ENCODE measurements at regions of chr7 and their contacts with region 1.

Region 1: GRCh38 chr7:21945454-21946227 is at the start of gene CDCA7L:
- DNase-seq: peak; percentile 44 to 93 (median 58)

Region 2: DNA sequence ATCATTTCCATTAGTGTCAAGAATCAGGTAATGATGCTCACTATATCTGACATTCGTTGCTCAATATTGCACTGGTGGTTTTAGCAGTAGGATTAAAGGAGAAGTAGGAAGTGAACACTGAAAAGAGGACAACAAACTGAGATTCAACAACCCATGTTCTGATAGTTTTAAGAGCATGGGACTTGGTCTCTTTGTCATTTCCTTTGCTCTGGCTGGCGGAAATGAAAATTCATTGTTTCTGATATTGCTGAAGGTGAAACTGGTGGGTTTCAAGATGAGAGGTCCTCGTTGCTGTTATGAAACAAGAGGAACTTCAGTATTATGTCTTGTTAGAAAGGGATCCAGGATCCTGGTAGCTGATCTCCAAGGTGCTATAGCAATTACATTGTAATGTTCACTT is 273.8 kb before region 1 on chr7:
- intact Hi-C with region 1: no loop called
- DNase-seq: no peak

Region 3: DNA sequence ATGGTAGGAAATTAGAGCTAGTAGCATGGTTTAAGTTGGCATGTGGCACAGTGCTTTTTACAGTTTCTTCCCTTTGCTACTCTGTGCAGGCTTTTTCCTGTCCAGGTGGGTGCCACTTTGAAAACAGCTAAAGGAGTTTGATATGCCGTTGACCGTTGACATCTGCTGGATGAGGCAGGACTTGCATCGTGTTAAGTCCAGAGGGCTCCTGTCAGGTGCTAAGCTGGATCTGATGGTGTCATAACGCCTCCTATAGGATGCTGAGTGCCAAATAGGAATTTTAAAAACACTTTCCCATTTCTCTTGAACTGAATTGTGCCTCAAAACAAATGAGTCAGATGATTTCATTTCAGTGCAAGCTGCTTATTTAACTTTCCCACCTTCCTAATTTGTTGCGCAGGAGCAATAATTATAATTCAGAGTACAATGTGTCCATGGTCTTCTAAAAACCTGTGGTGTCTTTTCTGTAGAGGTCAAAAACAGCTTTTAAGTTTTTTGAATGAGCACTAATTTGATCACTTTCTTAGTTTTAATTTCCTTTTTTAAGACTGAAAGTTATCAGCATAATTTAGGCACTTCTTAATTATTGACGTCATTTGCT is 178.2 kb before region 1 on chr7:
- intact Hi-C with region 1: loop called (anchors 10 kb)
- DNase-seq: peak in 5 of 10 donors; percentile 7 to 84 (median 27)

Measured in posterior cingulate gyrus (tissue), 11 donors.